ENCODE measurements at regions of chr20 and their contacts with region 1.

Region 1: DNA sequence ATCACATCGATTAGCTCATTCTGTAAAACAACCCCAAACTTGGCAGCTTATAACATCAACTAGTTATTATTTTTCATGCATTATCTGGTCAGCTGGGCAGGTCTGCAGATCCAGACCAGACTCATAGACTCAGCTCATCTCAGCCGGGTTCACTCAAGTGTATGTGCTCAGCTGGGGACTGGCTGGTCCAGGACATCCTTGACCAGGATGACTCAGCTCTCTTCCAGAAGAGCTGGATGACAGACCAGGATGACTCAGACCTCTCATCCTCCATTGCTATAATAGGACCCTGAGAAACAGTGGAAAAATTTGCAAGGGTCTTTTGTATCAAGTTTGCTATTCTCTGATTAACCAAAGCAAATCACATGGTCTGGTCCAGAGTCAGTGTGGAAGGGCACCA is 312.5 kb upstream of the PLCB4 start:
- DNase-seq: no peak
- H3K4me3 ChIP-seq: no peak overlapping the region
- H3K4me1 ChIP-seq: no peaks in the 10 kb centered on the region
- H3K27me3 ChIP-seq: no peaks in the 10 kb centered on the region

Region 2: DNA sequence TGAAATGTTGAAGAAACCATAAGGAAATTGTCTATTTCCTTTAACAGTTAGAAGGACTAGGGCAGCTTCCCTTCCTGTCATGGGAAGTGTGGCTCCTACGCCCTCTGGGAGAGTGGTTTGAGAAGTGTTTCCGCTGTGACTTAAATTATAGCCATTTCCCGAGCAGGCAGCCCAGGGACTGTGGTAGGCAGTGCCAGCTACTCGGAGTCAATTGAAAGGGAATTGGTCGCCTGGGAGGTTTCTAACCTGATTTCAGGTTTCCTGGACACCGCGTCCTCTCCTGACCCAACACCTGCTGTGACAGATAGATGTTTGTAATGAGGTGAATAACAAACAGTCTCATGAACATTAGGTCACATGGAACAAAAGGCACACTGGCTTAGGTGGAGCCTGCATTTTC is 56.4 kb after region 1 on chr20:
- in situ Hi-C with region 1: no loop called
- DNase-seq: no peak
- H3K4me3 ChIP-seq: no peak overlapping the region
- H3K4me1 ChIP-seq: peaks cover 35% of the 10 kb centered on the region
- H3K27me3 ChIP-seq: no peaks in the 10 kb centered on the region

Region 3: DNA sequence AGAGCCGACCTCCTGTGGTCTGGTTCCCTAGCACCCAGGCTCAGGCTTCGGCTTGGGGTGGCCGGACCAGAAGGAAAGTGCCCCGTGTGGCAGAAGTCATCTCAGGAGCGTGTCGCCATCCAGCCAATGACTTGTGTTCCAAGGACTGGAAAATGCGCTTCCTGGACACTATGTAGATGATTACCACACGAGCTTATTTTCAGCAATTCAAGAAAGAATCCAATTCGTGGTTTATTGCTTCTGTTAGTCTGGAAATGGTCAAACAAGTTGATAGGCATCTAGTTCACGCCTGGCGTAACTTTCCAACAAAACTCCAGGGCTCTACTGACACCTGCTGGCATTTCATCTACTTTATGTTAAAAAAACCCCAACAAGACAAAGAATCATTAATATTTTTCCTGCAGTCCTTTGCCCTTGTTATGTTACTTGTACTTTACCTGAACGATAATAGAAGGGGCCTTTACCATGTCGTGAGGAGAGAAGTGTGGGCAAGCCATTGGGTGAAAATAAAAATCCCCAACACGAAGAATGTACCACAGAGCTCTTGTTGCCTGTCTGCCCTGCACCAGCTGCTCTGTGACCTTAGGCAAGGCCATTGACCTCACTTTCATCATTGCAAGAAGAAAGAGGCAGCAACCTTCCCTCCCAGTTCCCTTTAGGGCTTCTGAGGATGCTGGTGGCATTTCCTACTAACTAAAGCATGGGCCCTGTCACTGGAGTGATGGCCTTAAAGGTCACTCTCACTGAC is 603.3 kb after region 1 on chr20:
- in situ Hi-C with region 1: loop called (anchors 5 kb)
- DNase-seq: peak; percentile 49 to 62
- H3K4me3 ChIP-seq: no peak overlapping the region
- H3K4me1 ChIP-seq: no peaks in the 10 kb centered on the region
- H3K27me3 ChIP-seq: no peaks in the 10 kb centered on the region